HepG2 (cell line): ENCODE measurements at regions of chr17 and their contacts with region 1.

Region 1: DNA sequence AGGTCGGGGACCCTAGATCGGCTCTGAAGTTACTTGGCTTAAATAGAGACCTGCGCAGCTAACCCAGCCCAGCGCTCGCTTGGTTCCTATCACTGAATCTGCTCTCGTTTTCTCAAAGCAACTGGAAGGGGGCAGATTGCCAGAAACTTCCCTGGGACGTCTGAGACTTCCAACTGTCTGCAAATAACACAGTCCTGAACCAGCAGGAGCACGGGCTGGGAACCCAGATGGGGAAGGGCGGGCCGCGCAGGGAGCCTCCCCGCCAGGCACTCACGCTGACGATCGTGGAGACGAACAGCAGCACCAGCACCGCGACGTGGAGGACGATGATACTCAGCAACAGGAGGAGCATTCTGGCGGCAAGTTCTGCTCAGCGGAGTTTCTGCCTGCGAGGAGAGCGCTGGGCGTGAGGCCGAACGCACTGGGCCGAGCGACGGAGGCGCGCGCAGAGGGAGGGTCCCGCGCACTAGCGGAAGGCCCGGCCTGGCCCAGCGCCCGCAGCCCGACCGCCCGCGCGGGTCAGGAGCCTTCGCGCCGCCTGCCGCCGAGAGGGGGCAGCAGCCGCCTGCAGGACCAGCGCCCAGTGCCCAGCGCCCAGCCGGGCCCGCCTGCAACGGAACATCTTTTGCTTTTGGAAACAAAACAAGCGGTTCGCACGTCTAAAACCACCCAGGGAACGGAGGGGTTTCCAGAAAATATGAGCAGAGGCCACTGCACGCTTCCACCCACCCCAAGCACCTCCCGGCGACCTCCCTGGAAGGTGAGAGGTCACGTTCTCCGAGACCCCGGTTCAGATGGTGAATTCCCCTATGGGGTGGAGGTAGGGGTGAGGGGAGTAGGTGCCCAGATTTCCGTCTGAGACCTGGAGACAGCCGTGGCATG is 4.5 kb downstream of the PMP22 start:
- DNase-seq: peak; percentile 35
- ATAC-seq: peak; percentile 92
- H3K4me3 ChIP-seq: peak overlapping the region; percentile 60 to 85 (median 81)
- H3K27ac ChIP-seq: no peak overlapping the region
- H3K4me1 ChIP-seq: peaks cover 54% of the 10 kb centered on the region
- H3K27me3 ChIP-seq: peaks cover 14 to 42% of the 10 kb centered on the region in 2 experiments
- CTCF ChIP-seq: peak; percentile 80
- EP300 ChIP-seq: no peak
- POLR2A ChIP-seq: peak in 1 of 2 experiments; percentile 55; a peak in 2 of 4 replicates
- RAD21 ChIP-seq: peak; percentile 97

Region 2: GRCh38 chr17:15377616-15378015 is 117.0 kb after region 1 on chr17:
- CTCF ChIA-PET with region 1: no interaction called
- POLR2A ChIA-PET with region 1: no interaction called
- in situ Hi-C with region 1: no loop called
- intact Hi-C with region 1: loop called (anchors 10 kb)
- DNase-seq: peak; percentile 89
- ATAC-seq: peak; percentile 99
- H3K4me3 ChIP-seq: peak overlapping the region in 1 of 3 experiments; percentile 25; a peak in 1 of 6 replicates
- H3K27ac ChIP-seq: peak overlapping the region; percentile 37
- H3K4me1 ChIP-seq: peaks cover 19% of the 10 kb centered on the region
- H3K27me3 ChIP-seq: no peaks in the 10 kb centered on the region
- CTCF ChIP-seq: no peak
- EP300 ChIP-seq: peak in 1 of 2 experiments; percentile 52; a peak in 1 of 4 replicates
- POLR2A ChIP-seq: no peak
- RAD21 ChIP-seq: no peak

Region 3: GRCh38 chr17:15432807-15433600 is 172.4 kb after region 1 on chr17:
- CTCF ChIA-PET with region 1: no interaction called
- POLR2A ChIA-PET with region 1: no interaction called
- in situ Hi-C with region 1: no loop called
- intact Hi-C with region 1: loop called (anchors 5 kb)
- DNase-seq: peak; percentile 97
- ATAC-seq: peak; percentile 83
- H3K4me3 ChIP-seq: peak overlapping the region; percentile 11 to 48 (median 46); a peak in 4 of 6 replicates
- H3K27ac ChIP-seq: peak overlapping the region; percentile 91
- H3K4me1 ChIP-seq: peaks cover 62% of the 10 kb centered on the region
- H3K27me3 ChIP-seq: no peaks in the 10 kb centered on the region
- CTCF ChIP-seq: no peak
- EP300 ChIP-seq: peak in 1 of 2 experiments; percentile 89; a peak in 1 of 4 replicates
- POLR2A ChIP-seq: peak in 1 of 2 experiments; percentile 84; a peak in 2 of 4 replicates
- RAD21 ChIP-seq: no peak

Region 4: DNA sequence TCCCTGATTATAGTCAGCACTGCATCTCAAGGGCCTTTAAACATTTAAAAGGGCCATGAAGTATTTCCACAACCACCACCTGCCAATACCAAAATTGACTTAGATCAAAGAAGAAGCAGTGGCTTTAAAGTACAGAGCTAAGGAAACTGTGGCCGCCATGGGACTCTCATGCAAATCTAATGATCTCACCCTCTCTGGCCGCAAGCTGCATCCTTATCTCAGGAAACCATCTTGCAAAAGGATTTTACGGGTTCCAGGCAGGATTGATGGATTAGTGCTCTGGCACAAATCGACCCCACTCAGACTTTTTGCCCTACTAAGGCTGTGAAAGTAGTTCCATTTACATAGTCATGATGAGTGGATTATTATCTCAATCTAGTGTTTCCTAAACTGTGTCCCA is 184.2 kb after region 1 on chr17:
- CTCF ChIA-PET with region 1: interaction called, 7 read pairs
- POLR2A ChIA-PET with region 1: no interaction called
- in situ Hi-C with region 1: no loop called
- intact Hi-C with region 1: loop called (anchors 5 kb)
- DNase-seq: no peak
- ATAC-seq: no peak
- H3K4me3 ChIP-seq: no peak overlapping the region
- H3K27ac ChIP-seq: no peak overlapping the region
- H3K4me1 ChIP-seq: no peaks in the 10 kb centered on the region
- H3K27me3 ChIP-seq: no peaks in the 10 kb centered on the region
- CTCF ChIP-seq: no peak
- EP300 ChIP-seq: no peak
- POLR2A ChIP-seq: no peak
- RAD21 ChIP-seq: no peak

Region 5: GRCh38 chr17:15502369-15503112 is 241.9 kb after region 1 on chr17:
- CTCF ChIA-PET with region 1: interaction called, 28 read pairs
- POLR2A ChIA-PET with region 1: interaction called, 4 read pairs
- in situ Hi-C with region 1: loop called (anchors 5 kb)
- intact Hi-C with region 1: loop called (anchors 1 kb)
- DNase-seq: peak; percentile 28
- ATAC-seq: peak; percentile 80
- H3K4me3 ChIP-seq: no peak overlapping the region
- H3K27ac ChIP-seq: no peak overlapping the region
- H3K4me1 ChIP-seq: no peaks in the 10 kb centered on the region
- H3K27me3 ChIP-seq: no peaks in the 10 kb centered on the region
- CTCF ChIP-seq: peak; percentile 77
- EP300 ChIP-seq: no peak
- POLR2A ChIP-seq: no peak
- RAD21 ChIP-seq: peak; percentile 67

Region 6: DNA sequence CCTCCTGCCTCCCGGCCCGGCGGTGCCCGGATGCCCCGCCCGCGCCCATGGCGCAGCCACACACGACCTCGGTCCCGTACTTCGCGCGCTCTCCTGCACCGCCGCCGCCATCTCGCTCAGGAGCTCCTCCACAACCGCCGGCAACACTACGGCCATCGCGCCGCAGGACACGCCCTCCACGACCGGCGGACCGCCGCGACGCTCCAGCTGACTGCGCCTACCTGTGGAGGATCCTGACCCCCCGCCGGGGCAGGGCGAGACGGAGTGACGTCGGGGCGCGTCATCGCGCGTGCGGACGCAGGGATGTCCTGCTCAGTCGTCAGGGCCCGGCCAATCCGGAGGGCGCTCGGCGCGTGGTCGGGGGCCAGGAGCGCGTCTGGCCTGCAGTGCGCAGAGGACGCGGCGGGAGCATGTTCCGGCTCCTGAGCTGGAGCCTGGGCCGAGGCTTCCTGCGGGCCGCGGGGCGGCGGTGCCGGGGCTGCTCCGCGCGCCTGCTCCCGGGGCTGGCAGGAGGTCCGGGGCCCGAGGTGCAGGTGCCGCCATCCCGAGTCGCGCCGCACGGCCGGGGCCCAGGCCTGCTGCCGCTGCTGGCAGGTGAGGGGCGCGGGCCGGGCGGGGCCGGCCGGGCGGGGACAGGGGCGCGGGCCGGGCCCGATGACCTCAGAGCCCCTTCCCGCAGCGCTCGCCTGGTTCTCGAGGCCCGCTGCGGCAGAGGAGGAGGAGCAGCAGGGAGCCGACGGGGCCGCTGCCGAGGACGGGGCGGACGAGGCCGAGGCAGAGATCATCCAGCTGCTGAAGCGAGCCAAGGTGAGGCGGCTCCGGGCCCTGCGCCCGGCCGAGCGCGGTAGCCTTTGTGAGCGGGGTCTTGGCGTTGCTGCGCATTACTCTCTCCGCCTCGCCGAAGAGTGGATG is 739.1 kb after region 1 on chr17 and contains the starts of genes TTC19 and ZSWIM7:
- CTCF ChIA-PET with region 1: no interaction called
- POLR2A ChIA-PET with region 1: no interaction called
- in situ Hi-C with region 1: no loop called
- intact Hi-C with region 1: loop called (anchors 5 kb)
- DNase-seq: peak; percentile 92
- ATAC-seq: peak; percentile 95
- H3K4me3 ChIP-seq: peak within 1 kb of the TSS; percentile 90 to 94 (median 91)
- H3K27ac ChIP-seq: peak within 1 kb of the TSS; percentile 94
- H3K4me1 ChIP-seq: peaks cover 26% of the 10 kb centered on the region
- H3K27me3 ChIP-seq: no peaks in the 10 kb centered on the region; a peak in 1 of 5 replicates
- CTCF ChIP-seq: peak; percentile 69
- EP300 ChIP-seq: no peak
- POLR2A ChIP-seq: peak; percentile 88 to 98
- RAD21 ChIP-seq: peak; percentile 47
- total RNA-seq, gene TTC19: 22.7 and 24.3 TPM in 2 replicates
- total RNA-seq, gene ZSWIM7: 13.1 and 16.8 TPM in 2 replicates